ENCODE measurements at regions of chr4 and their contacts with region 1.

Region 1: DNA sequence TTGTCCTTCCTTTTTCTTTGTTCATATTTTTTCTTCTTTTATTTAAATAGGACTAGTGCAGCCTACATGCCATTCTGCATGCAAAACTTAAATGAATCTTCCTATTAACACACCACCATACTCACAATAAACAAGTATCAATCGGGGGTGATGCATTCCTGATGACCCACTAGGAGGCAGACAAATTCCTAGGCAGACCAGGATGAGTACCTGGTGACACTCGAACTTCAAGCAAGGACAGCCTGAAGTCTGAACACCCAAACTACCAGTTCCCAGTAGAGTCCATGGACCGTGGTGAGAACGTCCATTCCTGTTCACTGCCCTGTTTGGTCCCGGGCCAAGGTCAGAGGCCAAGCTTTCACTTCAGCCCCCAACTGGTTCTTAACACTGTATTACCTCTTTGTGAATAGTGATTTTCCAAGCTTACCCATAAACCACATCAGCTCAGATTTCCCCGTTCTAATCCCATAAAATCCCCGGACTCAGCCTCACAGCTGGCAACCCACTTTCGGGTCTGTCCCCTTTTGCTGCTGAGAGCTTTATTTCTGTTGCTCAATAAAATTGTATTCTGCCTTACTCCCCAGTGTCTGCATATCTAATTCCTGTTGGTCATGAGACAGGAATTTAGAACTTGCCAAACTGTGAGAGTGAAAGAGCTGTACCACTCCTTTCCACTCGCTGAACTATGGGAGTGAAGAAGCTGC is 1286.6 kb downstream of the FSTL5 start:
- DNase-seq: no peak
- H3K4me3 ChIP-seq: no peak overlapping the region
- H3K27ac ChIP-seq: no peak overlapping the region
- H3K4me1 ChIP-seq: no peaks in the 10 kb centered on the region
- H3K27me3 ChIP-seq: no peaks in the 10 kb centered on the region
- CTCF ChIP-seq: no peak

Region 2: GRCh38 chr4:160848901-160849896 is 28.0 kb before region 1 on chr4:
- CTCF ChIA-PET with region 1: no interaction called
- dilution Hi-C with region 1: no loop called
- in situ Hi-C with region 1: no loop called
- intact Hi-C with region 1: loop called (anchors 1 kb)
- DNase-seq: no peak
- H3K4me3 ChIP-seq: no peak overlapping the region
- H3K27ac ChIP-seq: no peak overlapping the region
- H3K4me1 ChIP-seq: no peaks in the 10 kb centered on the region
- H3K27me3 ChIP-seq: no peaks in the 10 kb centered on the region
- CTCF ChIP-seq: no peak